CD8-positive, alpha-beta memory T cell (primary cell): ENCODE measurements at regions of chr13 and their contacts with region 1.

Region 1: GRCh38 chr13:99577934-99578917 is 77.0 kb downstream of the TM9SF2 start:
- DNase-seq: no peak
- H3K4me3 ChIP-seq: no peak overlapping the region
- H3K4me3 Mint-ChIP-seq: no peak overlapping the region
- H3K27ac ChIP-seq: no peak overlapping the region
- H3K27ac Mint-ChIP-seq: peak overlapping the region in 1 of 8 donors; percentile 33
- H3K4me1 ChIP-seq: no peaks in the 10 kb centered on the region
- H3K4me1 Mint-ChIP-seq: peaks cover 0 to 7% (median 0%) of the 10 kb centered on the region in 3 donors
- H3K27me3 ChIP-seq: no peaks in the 10 kb centered on the region
- H3K27me3 Mint-ChIP-seq: no peaks in the 10 kb centered on the region

Region 2: GRCh38 chr13:99610702-99611289 is 32.6 kb after region 1 on chr13:
- CTCF ChIA-PET with region 1: interaction called, 12 read pairs
- POLR2A ChIA-PET with region 1: no interaction called
- DNase-seq: no peak
- H3K4me3 ChIP-seq: no peak overlapping the region
- H3K4me3 Mint-ChIP-seq: peak overlapping the region in 1 of 7 donors; percentile 14
- H3K27ac ChIP-seq: no peak overlapping the region
- H3K27ac Mint-ChIP-seq: peak overlapping the region in 3 of 8 donors; percentile 26 to 64 (median 64)
- H3K4me1 ChIP-seq: peaks cover 10% of the 10 kb centered on the region
- H3K4me1 Mint-ChIP-seq: peaks cover 37 to 59% (median 50%) of the 10 kb centered on the region in 3 donors
- H3K27me3 ChIP-seq: no peaks in the 10 kb centered on the region
- H3K27me3 Mint-ChIP-seq: no peaks in the 10 kb centered on the region

Region 3: DNA sequence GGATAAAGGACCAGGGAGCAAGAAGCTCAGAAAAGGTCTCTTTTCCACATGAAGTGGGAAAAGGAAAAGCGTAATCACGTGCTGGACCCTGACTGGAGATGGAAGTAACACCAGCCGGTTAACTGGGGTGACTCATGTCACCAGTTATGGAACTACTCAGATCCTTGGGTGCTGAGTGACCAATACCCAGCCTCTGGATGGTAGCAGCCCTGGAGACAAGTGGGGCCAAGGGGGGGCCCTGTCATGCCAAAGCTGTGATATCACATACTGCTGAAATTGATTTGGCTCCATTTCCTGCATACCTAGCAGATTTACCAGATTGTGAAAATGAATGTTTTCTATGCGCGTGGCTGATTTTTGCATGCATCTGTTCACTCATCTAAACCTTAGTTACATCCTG is 234.4 kb after region 1 on chr13:
- CTCF ChIA-PET with region 1: no interaction called
- POLR2A ChIA-PET with region 1: no interaction called
- DNase-seq: no peak
- H3K4me3 ChIP-seq: no peak overlapping the region
- H3K4me3 Mint-ChIP-seq: no peak overlapping the region
- H3K27ac ChIP-seq: no peak overlapping the region
- H3K27ac Mint-ChIP-seq: no peak overlapping the region
- H3K4me1 ChIP-seq: peaks cover 11% of the 10 kb centered on the region
- H3K4me1 Mint-ChIP-seq: peaks cover 9 to 12% (median 10%) of the 10 kb centered on the region in 3 donors
- H3K27me3 ChIP-seq: no peaks in the 10 kb centered on the region
- H3K27me3 Mint-ChIP-seq: peaks cover 0 to 2% of the 10 kb centered on the region in 2 donors